Transverse colon (tissue), 4 donors: ENCODE measurements at regions of chr1 and their contacts with region 1.

Region 1: DNA sequence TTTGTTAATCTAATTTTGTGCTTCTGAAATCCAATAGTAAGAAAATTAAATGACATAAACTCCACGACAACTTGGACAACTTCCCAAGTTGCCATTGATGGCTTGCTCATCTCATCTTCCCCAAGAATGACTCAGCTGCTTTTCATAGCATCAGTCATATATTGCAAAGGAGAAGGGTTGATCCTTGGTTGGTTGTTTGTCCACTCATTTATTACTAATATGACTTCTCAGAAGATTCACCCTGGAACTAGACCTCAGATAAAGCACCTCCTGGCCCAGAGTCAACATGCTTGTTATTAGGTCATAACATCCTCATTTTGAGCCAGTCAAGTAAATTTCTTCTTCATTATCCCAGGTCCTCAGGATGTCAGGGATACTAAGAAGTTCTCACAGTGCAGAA is 2.3 kb upstream of the LCE3D start:
- DNase-seq: no peak
- H3K4me3 ChIP-seq: no peak overlapping the region
- H3K27ac ChIP-seq: no peak overlapping the region
- H3K4me1 ChIP-seq: no peaks in the 10 kb centered on the region
- H3K27me3 ChIP-seq: no peaks in the 10 kb centered on the region
- CTCF ChIP-seq: no peak
- EP300 ChIP-seq: no peak
- POLR2A ChIP-seq: no peak

Region 2: DNA sequence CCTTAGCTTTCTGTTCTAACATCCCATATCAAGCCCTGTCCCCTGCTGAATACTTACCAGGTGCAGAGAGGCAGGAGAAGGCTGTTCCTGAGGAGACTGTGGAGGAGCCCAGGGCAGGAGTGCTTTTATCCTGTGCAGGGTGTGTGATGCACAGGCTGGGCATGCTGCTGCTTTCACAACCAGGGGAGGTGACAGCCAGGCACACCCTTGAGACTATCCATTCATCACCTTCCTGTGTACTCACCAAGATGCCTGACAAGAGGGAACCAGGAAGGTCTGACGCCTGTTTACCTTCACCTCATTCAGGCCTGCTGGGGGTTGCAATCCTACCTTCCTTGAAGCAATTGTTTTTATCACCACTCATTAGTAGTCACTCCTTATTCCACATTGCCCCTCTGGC is 16.0 kb before region 1 on chr1 and contains the start of gene LCE3E:
- in situ Hi-C with region 1: no loop called
- intact Hi-C with region 1: no loop called
- DNase-seq: no peak
- H3K4me3 ChIP-seq: no peak within 1 kb of the TSS
- H3K27ac ChIP-seq: no peak within 1 kb of the TSS
- H3K4me1 ChIP-seq: no peaks in the 10 kb centered on the region
- H3K27me3 ChIP-seq: no peaks in the 10 kb centered on the region
- CTCF ChIP-seq: no peak
- EP300 ChIP-seq: no peak
- POLR2A ChIP-seq: no peak
- total RNA-seq, gene LCE3E: not detected

Region 3: DNA sequence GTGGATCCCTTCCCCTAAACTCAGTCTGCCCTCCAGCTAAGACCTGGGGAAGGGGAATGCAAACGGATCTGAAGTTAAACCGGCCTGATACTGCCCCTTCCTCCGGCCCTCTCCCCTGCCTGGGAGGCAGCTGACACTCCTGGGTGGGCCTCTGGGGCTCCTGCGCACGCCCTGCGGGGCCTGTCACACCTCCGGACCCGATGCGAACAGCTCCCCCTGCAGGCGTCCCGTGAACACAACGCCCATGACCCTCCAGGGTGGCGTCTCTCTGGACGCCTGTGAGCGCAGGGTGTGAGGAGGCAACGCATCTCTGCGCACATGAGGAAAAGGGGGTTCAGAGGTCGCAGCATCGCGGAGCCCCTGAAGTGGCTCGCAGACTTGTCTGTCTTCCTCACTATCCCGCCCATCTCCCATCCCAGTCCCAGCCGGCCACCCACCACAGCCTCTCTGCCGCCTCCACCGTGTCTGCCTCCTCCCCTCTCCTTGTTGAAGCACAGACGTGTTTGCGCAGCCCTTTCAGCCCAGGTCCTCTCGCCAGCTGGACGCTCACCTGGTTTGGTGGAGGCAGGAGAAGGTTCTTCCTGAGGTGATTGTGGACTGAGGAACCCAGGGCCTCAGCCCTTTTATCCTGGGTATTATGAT is 40.7 kb after region 1 on chr1:
- in situ Hi-C with region 1: no loop called
- intact Hi-C with region 1: loop called (anchors 1 kb)
- DNase-seq: no peak
- H3K4me3 ChIP-seq: no peak overlapping the region
- H3K27ac ChIP-seq: no peak overlapping the region
- H3K4me1 ChIP-seq: no peaks in the 10 kb centered on the region
- H3K27me3 ChIP-seq: no peaks in the 10 kb centered on the region
- CTCF ChIP-seq: no peak
- EP300 ChIP-seq: no peak
- POLR2A ChIP-seq: no peak